ENCODE measurements at regions of chr3 and their contacts with region 1.

Region 1: DNA sequence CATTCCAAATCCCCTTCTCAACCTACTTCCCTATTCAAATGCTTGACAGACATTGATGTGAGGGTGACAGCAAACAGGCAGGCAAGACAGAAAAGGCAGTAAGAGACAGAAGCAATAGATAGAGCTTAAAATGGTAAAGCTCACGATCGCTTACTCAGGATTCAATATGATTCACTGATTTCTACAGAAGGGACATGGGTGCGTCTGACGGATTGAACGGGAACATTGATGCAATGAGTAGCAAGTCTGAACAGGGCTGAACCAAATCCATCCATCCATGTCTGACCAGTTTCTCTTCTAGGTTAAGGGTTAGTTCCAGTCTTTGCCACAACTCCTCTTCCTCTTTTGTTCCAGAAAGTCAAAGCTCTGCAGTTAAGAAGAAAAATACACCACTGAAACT is 35.1 kb downstream of the P2RY1 start:
- DNase-seq: no peak
- H3K4me3 ChIP-seq: no peak overlapping the region
- H3K27ac ChIP-seq: no peak overlapping the region
- H3K4me1 ChIP-seq: no peaks in the 10 kb centered on the region
- H3K27me3 ChIP-seq: no peaks in the 10 kb centered on the region
- CTCF ChIP-seq: no peak

Region 2: GRCh38 chr3:153752405-153753027 is 882.5 kb after region 1 on chr3:
- CTCF ChIA-PET with region 1: no interaction called
- POLR2A ChIA-PET with region 1: interaction called, 14 read pairs
- intact Hi-C with region 1: no loop called
- DNase-seq: no peak
- H3K4me3 ChIP-seq: no peak overlapping the region
- H3K27ac ChIP-seq: no peak overlapping the region
- H3K4me1 ChIP-seq: peaks cover 8% of the 10 kb centered on the region; the same call in 1 of the 2 replicates
- H3K27me3 ChIP-seq: no peaks in the 10 kb centered on the region
- CTCF ChIP-seq: no peak

Measured in PC-9 (cell line).